GM18951 (cell line): ENCODE measurements at regions of chr5 and their contacts with region 1.

Region 1: DNA sequence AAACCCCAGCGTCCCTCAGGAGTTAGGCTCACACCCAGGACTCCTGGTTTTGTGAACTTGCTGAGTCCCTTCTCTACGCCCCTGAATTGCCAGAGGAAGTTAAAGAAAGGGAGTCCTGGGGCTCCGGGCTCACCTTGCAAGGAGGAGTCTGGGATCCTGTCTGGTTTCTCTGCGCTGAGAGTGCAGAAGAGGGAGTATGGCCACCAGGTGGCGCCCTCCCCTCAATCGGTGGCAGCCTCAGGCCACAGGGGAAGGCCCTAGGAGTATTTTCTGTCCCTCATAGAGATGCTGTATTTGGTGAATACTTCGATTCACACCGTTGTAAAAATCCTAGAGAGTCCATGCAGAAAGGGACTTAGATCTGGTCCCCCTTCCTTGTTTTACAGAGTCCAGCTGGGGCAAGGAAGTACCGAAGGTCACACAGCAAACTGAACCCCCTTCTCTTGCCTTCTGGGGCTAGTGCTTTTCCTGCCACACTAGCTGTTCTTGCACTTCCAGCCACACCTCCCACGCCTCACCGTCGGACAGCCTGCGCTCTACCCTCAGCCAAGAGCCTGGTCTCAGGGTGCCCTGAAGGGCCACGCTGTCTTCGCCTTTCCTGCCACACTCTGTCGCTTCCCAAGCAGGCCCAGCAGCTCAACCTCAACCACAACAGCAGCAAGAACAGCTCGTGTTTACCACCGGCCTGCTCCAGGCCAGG is 10.2 kb downstream of the HAND1 start:
- POLR2A ChIP-seq: no peak

Region 2: GRCh38 chr5:154575546-154576428 is 108.0 kb after region 1 on chr5:
- in situ Hi-C with region 1: loop called (anchors 10 kb)
- POLR2A ChIP-seq: no peak

Region 3: DNA sequence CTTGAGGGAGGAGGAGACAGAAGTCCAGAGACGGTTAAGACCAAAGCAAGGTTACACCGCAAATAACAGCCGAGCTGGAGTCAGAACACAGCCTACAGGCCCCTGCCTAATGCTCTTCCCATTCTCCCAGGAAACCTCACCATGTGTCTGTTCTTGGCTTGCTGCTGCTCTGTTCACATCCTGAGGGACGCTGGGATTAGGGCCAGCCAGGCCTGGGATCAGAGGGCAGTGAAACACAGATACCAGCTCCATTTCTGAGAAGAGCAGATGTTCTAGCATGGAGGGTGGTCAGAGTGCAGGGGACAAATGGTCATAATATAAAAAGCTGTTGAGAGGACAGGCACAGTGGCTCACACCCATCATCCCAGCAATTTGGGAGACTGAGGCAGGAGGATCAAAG is 162.6 kb after region 1 on chr5:
- in situ Hi-C with region 1: loop called (anchors 10 kb)
- POLR2A ChIP-seq: no peak